Prostate gland (tissue), 2 donors: ENCODE measurements at regions of chr1 and their contacts with region 1.

Region 1: GRCh38 chr1:7983086-7983778 is 21.7 kb downstream of the PARK7 start:
- DNase-seq: no peak
- H3K4me3 ChIP-seq: no peak overlapping the region
- H3K27ac ChIP-seq: peak overlapping the region in 1 of 2 donors; percentile 21
- H3K4me1 ChIP-seq: no peaks in the 10 kb centered on the region
- H3K27me3 ChIP-seq: no peaks in the 10 kb centered on the region
- CTCF ChIP-seq: no peak
- POLR2A ChIP-seq: no peak

Region 2: GRCh38 chr1:8015036-8015808 is 32.0 kb after region 1 on chr1:
- intact Hi-C with region 1: loop called (anchors 5 kb)
- DNase-seq: peak; percentile 70
- H3K4me3 ChIP-seq: peak overlapping the region in 1 of 2 donors; percentile 6
- H3K27ac ChIP-seq: peak overlapping the region; percentile 63 to 94
- H3K4me1 ChIP-seq: peaks cover 28% of the 10 kb centered on the region
- H3K27me3 ChIP-seq: no peaks in the 10 kb centered on the region
- CTCF ChIP-seq: peak; percentile 63 to 88 (median 80)
- POLR2A ChIP-seq: no peak

Region 3: GRCh38 chr1:8314346-8315280 is 331.4 kb after region 1 on chr1:
- intact Hi-C with region 1: loop called (anchors 2 kb)
- DNase-seq: peak; percentile 86
- H3K4me3 ChIP-seq: no peak overlapping the region
- H3K27ac ChIP-seq: peak overlapping the region in 1 of 2 donors; percentile 78
- H3K4me1 ChIP-seq: peaks cover 12% of the 10 kb centered on the region
- H3K27me3 ChIP-seq: no peaks in the 10 kb centered on the region
- CTCF ChIP-seq: peak; percentile 81 to 99 (median 96)
- POLR2A ChIP-seq: no peak

Region 4: GRCh38 chr1:8348777-8349491 is 365.7 kb after region 1 on chr1:
- intact Hi-C with region 1: loop called (anchors 2 kb)
- DNase-seq: peak; percentile 68
- H3K4me3 ChIP-seq: no peak overlapping the region
- H3K27ac ChIP-seq: peak overlapping the region; percentile 39 to 41
- H3K4me1 ChIP-seq: peaks cover 12% of the 10 kb centered on the region
- H3K27me3 ChIP-seq: no peaks in the 10 kb centered on the region
- CTCF ChIP-seq: peak; percentile 81 to 88 (median 86)
- POLR2A ChIP-seq: no peak